Activated naive CD4-positive, alpha-beta T cell treated with anti-CD3 and anti-CD28 coated beads for 36 hours (primary cell): ENCODE measurements at regions of chr1 and their contacts with region 1.

Region 1: DNA sequence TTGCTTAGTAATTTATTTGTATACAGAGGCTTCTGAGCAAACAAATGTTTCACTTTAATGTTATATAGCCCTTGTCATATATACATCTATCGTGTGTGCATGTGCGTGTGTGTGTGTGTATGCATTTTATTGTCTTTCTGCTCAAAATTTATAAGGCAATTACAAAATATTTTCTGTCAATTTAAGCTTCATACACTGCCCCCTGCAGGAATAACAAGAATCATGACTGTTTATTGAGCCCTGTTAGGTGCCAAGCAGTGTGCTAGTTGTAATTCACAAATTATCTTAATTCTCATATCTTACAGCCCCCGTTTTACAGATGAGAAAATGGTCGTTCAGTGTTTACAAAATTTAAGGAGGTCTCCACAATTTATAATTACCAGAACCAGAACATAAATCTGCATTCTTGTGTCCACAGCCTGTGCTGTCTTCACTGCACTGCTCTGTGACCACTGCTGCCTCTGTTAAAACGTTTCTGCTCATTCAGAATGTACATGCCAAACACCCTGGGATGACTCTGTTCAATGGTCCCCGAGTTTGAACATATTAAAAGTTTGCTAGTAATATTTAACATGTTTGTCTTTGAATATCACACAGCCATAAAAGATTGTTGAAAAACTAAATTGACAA is 181.3 kb downstream of the ATP6V1G3 start:
- DNase-seq: no peak
- H3K4me3 Mint-ChIP-seq: no peak overlapping the region
- H3K27ac Mint-ChIP-seq: no peak overlapping the region
- H3K4me1 Mint-ChIP-seq: no peaks in the 10 kb centered on the region
- H3K27me3 Mint-ChIP-seq: no peaks in the 10 kb centered on the region

Region 2: GRCh38 chr1:197526736-197527371 is 832.3 kb before region 1 on chr1:
- CTCF ChIA-PET with region 1: no interaction called
- intact Hi-C with region 1: loop called (anchors 5 kb)
- DNase-seq: no peak
- H3K4me3 Mint-ChIP-seq: no peak overlapping the region
- H3K27ac Mint-ChIP-seq: no peak overlapping the region
- H3K4me1 Mint-ChIP-seq: no peaks in the 10 kb centered on the region
- H3K27me3 Mint-ChIP-seq: no peaks in the 10 kb centered on the region

Region 3: DNA sequence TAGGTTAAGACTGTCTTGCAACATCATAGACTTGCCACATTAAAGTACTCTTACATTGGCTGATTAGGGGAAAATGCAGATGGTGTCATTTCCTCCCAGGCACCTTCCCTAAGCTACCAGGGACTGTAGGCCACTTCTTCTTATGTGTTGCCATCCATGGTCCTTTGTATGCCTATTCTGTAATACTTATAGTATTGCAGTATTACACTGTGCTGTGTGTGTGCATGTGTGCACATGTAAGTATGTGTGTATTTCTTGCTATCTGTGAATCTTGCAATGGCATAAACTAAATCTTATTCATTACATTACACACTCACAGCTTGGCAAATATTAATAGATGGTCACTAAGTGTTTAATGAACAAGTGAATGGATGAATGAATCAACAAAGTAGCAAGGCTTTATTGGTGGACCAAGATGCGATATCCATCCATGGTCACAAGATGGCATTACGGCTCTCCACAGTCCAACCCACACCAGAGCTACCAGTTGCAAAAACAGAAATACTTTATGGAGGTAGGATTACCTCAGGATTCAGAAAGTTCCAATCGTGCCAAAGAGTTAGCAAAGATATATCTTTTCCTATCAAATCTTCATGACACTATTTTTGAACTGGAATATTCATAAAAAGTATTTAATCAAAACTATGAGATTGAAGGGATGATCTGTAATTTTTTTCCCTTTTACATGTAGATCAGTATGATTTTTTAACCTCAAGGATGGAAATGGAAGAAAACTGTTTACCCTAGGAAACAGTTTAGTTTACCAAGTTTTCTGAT is 744.0 kb before region 1 on chr1:
- CTCF ChIA-PET with region 1: interaction called, 3 read pairs
- intact Hi-C with region 1: loop called (anchors 10 kb)
- DNase-seq: peak; percentile 49
- H3K4me3 Mint-ChIP-seq: no peak overlapping the region
- H3K27ac Mint-ChIP-seq: no peak overlapping the region
- H3K4me1 Mint-ChIP-seq: no peaks in the 10 kb centered on the region
- H3K27me3 Mint-ChIP-seq: no peaks in the 10 kb centered on the region

Region 4: DNA sequence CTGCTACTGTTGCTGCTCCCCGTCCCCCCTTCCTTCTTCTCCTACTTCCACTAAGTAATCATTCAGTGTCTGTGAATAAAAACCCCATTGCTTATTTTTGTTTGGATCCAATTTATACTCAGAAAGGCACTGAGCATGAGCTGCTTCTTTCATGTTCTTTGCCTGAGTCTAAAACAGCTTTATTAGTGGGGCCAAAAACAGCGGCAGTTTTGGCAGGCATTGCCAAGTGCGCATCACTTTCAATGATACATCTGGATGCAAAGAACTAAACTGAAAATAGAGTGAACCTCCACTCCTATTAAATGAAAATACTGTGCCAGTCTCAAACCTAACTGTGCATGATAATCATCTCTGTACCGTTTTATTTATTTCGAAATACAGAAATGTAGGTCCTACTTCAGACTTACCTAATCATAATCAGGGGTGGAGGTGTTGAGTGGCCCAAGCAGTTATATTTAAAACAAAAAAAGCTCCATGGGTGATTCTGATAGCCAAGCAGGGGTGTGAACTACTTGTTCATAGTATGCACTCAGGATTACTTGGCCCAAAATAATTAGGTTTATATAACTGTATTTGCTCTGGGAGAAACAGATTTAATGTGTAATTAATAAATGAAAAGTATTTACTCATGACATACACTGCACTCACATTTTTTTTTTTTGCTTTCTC is 154.0 kb before region 1 on chr1:
- CTCF ChIA-PET with region 1: interaction called, 3 read pairs
- intact Hi-C with region 1: loop called (anchors 5 kb)
- DNase-seq: no peak
- H3K4me3 Mint-ChIP-seq: no peak overlapping the region
- H3K27ac Mint-ChIP-seq: no peak overlapping the region
- H3K4me1 Mint-ChIP-seq: peaks cover 54% of the 10 kb centered on the region
- H3K27me3 Mint-ChIP-seq: no peaks in the 10 kb centered on the region

Region 5: GRCh38 chr1:198416296-198416695 is 57.2 kb after region 1 on chr1:
- CTCF ChIA-PET with region 1: no interaction called
- intact Hi-C with region 1: no loop called
- DNase-seq: no peak
- H3K4me3 Mint-ChIP-seq: no peak overlapping the region
- H3K27ac Mint-ChIP-seq: no peak overlapping the region
- H3K4me1 Mint-ChIP-seq: no peaks in the 10 kb centered on the region
- H3K27me3 Mint-ChIP-seq: peaks cover 5% of the 10 kb centered on the region